MCF 10A (cell line): ENCODE measurements at regions of chr9 and their contacts with region 1.

Region 1: DNA sequence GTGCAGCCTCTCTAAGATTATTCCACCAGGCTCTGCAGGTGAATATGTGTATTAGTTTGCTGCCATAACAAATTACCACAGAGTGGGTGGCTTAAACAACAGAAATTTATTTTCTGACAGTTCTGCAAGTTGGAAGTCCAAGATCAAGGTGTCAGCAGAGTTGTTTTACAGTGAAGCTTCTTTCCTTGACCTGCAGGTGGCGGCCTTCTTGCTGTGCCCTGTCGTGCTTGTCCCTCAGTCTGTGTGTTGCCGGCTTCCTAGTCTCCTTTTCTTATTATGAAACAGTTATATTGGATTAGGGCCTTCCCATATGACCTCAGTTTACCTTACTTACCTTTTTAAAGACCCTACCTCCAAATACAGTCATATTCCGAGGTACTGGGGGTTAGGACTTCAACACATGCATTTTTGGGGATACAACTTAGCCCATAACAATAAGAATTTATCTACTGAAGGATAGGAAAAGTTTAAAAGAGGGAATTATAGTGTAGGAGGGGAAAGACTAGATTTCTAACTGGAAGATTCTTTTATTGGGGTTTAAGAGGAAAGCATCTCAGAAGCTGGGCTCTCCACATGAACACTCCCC is 97.4 kb downstream of the OSTF1 start:
- DNase-seq: peak; percentile 64
- H3K4me3 Mint-ChIP-seq: no peak overlapping the region
- H3K27ac Mint-ChIP-seq: no peak overlapping the region
- H3K4me1 Mint-ChIP-seq: peaks cover 5% of the 10 kb centered on the region
- H3K27me3 Mint-ChIP-seq: no peaks in the 10 kb centered on the region
- CTCF ChIP-seq: peak; percentile 54

Region 2: DNA sequence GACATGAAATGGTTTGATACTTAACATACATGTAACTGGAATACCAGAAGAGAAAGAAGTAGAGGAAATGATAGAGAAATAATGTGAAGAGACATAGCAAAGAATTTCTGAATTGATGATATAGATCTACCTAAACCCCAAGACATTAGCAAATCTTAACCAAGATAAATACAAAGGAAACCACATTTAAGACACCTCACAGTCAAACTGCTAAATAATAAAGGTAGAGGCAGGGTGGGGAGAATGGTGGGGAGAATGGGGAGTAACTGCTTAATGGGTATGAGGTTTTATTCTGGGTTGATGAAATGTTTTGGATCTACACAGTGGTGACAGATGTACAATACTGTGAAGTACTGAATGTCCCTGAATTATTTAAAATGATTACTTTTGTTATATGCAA is 175.1 kb before region 1 on chr9:
- CTCF ChIA-PET with region 1: no interaction called
- POLR2A ChIA-PET with region 1: no interaction called
- intact Hi-C with region 1: no loop called
- DNase-seq: no peak
- H3K4me3 Mint-ChIP-seq: no peak overlapping the region
- H3K27ac Mint-ChIP-seq: peak overlapping the region; percentile 47
- H3K4me1 Mint-ChIP-seq: peaks cover 5% of the 10 kb centered on the region
- H3K27me3 Mint-ChIP-seq: no peaks in the 10 kb centered on the region
- CTCF ChIP-seq: no peak

Region 3: DNA sequence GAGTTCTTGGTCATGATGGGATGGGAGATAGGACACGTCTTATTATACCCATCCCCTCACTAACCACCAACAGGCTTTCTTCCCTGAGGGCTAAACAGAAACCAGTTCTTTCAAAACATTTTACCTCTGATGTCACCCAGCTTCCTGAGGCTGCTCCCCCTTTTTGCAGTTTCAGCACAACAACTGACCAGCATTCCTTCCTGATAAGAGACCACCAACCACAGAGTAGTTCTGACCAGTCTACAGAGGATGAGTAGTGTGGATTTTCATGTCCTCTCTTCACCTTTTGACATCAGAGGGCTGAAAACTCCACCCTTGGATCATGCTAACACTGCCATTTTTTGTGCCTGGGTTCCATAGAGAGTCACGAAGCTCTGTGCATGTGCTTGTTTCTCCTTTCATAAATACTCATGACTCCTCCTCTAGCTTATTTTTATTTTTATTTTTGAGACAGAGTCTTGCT is 14.7 kb before region 1 on chr9:
- CTCF ChIA-PET with region 1: interaction called, 16 read pairs
- POLR2A ChIA-PET with region 1: interaction called, 5 read pairs
- intact Hi-C with region 1: no loop called
- DNase-seq: peak; percentile 23
- H3K4me3 Mint-ChIP-seq: no peak overlapping the region
- H3K27ac Mint-ChIP-seq: no peak overlapping the region
- H3K4me1 Mint-ChIP-seq: peaks cover 11% of the 10 kb centered on the region
- H3K27me3 Mint-ChIP-seq: no peaks in the 10 kb centered on the region
- CTCF ChIP-seq: no peak

Region 4: GRCh38 chr9:75238311-75238978 is 52.8 kb after region 1 on chr9:
- CTCF ChIA-PET with region 1: interaction called, 26 read pairs
- POLR2A ChIA-PET with region 1: interaction called, 6 read pairs
- intact Hi-C with region 1: loop called (anchors 10 kb)
- DNase-seq: peak; percentile 89
- H3K4me3 Mint-ChIP-seq: no peak overlapping the region
- H3K27ac Mint-ChIP-seq: no peak overlapping the region
- H3K4me1 Mint-ChIP-seq: peaks cover 18% of the 10 kb centered on the region
- H3K27me3 Mint-ChIP-seq: no peaks in the 10 kb centered on the region
- CTCF ChIP-seq: peak; percentile 72

Region 5: GRCh38 chr9:75467142-75467541 is 281.5 kb after region 1 on chr9:
- CTCF ChIA-PET with region 1: no interaction called
- POLR2A ChIA-PET with region 1: no interaction called
- intact Hi-C with region 1: no loop called
- DNase-seq: no peak
- H3K4me3 Mint-ChIP-seq: no peak overlapping the region
- H3K27ac Mint-ChIP-seq: no peak overlapping the region
- H3K4me1 Mint-ChIP-seq: no peaks in the 10 kb centered on the region
- H3K27me3 Mint-ChIP-seq: no peaks in the 10 kb centered on the region
- CTCF ChIP-seq: no peak